ENCODE measurements at regions of chr1 and their contacts with region 1.

Region 1: GRCh38 chr1:109213785-109214468 is at the start of gene SARS1:
- DNase-seq: peak; percentile 75 to 95 (median 88)
- ATAC-seq: peak; percentile 82
- H3K4me3 ChIP-seq: peak within 1 kb of the TSS; percentile 81
- H3K4me3 Mint-ChIP-seq: peak within 1 kb of the TSS; percentile 99
- H3K27ac ChIP-seq: peak within 1 kb of the TSS; percentile 73 to 74
- H3K27ac Mint-ChIP-seq: peak within 1 kb of the TSS; percentile 90
- H3K4me1 ChIP-seq: peaks cover 33% of the 10 kb centered on the region
- H3K4me1 Mint-ChIP-seq: peaks cover 41% of the 10 kb centered on the region
- H3K27me3 ChIP-seq: no peaks in the 10 kb centered on the region
- H3K27me3 Mint-ChIP-seq: no peaks in the 10 kb centered on the region
- CTCF ChIP-seq: no peak
- total RNA-seq, gene SARS1: 122 to 131 TPM

Region 2: DNA sequence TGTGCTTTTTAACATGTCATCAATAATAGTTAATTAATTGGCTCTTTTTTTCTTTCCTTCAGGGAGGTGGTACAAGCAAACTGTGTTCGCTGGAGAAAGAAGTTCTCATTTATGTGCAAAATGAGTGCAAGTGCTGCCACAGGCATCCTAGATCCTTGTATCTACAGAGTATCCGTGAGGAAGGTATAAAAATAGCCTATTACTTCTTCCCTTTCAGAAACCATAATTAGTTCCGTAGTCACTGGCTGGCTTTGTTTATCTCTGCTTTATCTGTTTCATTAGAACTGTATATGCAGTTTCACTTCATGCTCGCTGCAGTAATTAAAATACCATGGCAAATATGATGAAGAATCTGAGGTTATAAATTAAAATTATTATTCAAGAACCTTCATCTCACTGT is 613.4 kb before region 1 on chr1:
- CTCF ChIA-PET with region 1: no interaction called
- POLR2A ChIA-PET with region 1: no interaction called
- intact Hi-C with region 1: no loop called
- DNase-seq: no peak
- ATAC-seq: no peak
- H3K4me3 ChIP-seq: no peak overlapping the region
- H3K4me3 Mint-ChIP-seq: no peak overlapping the region
- H3K27ac ChIP-seq: no peak overlapping the region
- H3K27ac Mint-ChIP-seq: no peak overlapping the region
- H3K4me1 ChIP-seq: no peaks in the 10 kb centered on the region
- H3K4me1 Mint-ChIP-seq: peaks cover 9% of the 10 kb centered on the region
- H3K27me3 ChIP-seq: no peaks in the 10 kb centered on the region
- H3K27me3 Mint-ChIP-seq: no peaks in the 10 kb centered on the region
- CTCF ChIP-seq: no peak

Region 3: GRCh38 chr1:109201123-109201703 is 12.7 kb before region 1 on chr1:
- CTCF ChIA-PET with region 1: interaction called, 9 read pairs
- POLR2A ChIA-PET with region 1: interaction called, 11 read pairs
- intact Hi-C with region 1: no loop called
- DNase-seq: peak in 7 of 14 experiments; percentile 5 to 44 (median 27)
- ATAC-seq: no peak
- H3K4me3 ChIP-seq: no peak overlapping the region
- H3K4me3 Mint-ChIP-seq: no peak overlapping the region
- H3K27ac ChIP-seq: no peak overlapping the region
- H3K27ac Mint-ChIP-seq: no peak overlapping the region
- H3K4me1 ChIP-seq: peaks cover 11% of the 10 kb centered on the region
- H3K4me1 Mint-ChIP-seq: peaks cover 17% of the 10 kb centered on the region
- H3K27me3 ChIP-seq: no peaks in the 10 kb centered on the region
- H3K27me3 Mint-ChIP-seq: no peaks in the 10 kb centered on the region
- CTCF ChIP-seq: no peak

Region 4: DNA sequence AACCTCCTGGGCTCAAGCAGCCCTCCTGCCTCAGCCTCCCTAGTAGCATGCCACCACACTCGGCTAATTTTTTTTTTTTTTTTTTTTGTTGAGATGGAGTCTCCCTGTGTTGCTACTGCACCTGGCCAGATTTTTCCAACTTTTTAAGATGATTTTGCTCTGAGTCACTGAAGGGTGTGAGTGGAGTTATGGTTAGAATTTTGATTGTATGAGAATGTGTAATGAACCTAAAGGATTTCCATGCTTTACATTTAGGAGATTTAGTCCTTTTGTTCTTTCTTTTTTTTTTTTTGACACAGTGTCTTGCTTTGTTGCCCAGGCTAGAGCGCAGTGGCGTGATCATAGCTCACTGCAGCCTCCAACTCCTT is 12.1 kb after region 1 on chr1:
- CTCF ChIA-PET with region 1: interaction called, 3 read pairs
- POLR2A ChIA-PET with region 1: interaction called, 14 read pairs
- intact Hi-C with region 1: no loop called
- DNase-seq: no peak
- ATAC-seq: no peak
- H3K4me3 ChIP-seq: no peak overlapping the region
- H3K4me3 Mint-ChIP-seq: no peak overlapping the region
- H3K27ac ChIP-seq: no peak overlapping the region
- H3K27ac Mint-ChIP-seq: peak overlapping the region; percentile 60
- H3K4me1 ChIP-seq: peaks cover 5% of the 10 kb centered on the region
- H3K4me1 Mint-ChIP-seq: peaks cover 34% of the 10 kb centered on the region
- H3K27me3 ChIP-seq: no peaks in the 10 kb centered on the region
- H3K27me3 Mint-ChIP-seq: no peaks in the 10 kb centered on the region
- CTCF ChIP-seq: no peak

Region 5: GRCh38 chr1:109239580-109240095 is 25.7 kb after region 1 on chr1:
- CTCF ChIA-PET with region 1: no interaction called
- POLR2A ChIA-PET with region 1: interaction called, 15 read pairs
- intact Hi-C with region 1: no loop called
- DNase-seq: peak in 5 of 14 experiments; percentile 31 to 64 (median 40)
- ATAC-seq: peak; percentile 75
- H3K4me3 ChIP-seq: no peak overlapping the region
- H3K4me3 Mint-ChIP-seq: no peak overlapping the region
- H3K27ac ChIP-seq: no peak overlapping the region
- H3K27ac Mint-ChIP-seq: peak overlapping the region; percentile 73
- H3K4me1 ChIP-seq: peaks cover 29% of the 10 kb centered on the region
- H3K4me1 Mint-ChIP-seq: peaks cover 31% of the 10 kb centered on the region
- H3K27me3 ChIP-seq: peaks cover 0 to 3% of the 10 kb centered on the region in 2 experiments
- H3K27me3 Mint-ChIP-seq: no peaks in the 10 kb centered on the region
- CTCF ChIP-seq: peak; percentile 26

Region 6: DNA sequence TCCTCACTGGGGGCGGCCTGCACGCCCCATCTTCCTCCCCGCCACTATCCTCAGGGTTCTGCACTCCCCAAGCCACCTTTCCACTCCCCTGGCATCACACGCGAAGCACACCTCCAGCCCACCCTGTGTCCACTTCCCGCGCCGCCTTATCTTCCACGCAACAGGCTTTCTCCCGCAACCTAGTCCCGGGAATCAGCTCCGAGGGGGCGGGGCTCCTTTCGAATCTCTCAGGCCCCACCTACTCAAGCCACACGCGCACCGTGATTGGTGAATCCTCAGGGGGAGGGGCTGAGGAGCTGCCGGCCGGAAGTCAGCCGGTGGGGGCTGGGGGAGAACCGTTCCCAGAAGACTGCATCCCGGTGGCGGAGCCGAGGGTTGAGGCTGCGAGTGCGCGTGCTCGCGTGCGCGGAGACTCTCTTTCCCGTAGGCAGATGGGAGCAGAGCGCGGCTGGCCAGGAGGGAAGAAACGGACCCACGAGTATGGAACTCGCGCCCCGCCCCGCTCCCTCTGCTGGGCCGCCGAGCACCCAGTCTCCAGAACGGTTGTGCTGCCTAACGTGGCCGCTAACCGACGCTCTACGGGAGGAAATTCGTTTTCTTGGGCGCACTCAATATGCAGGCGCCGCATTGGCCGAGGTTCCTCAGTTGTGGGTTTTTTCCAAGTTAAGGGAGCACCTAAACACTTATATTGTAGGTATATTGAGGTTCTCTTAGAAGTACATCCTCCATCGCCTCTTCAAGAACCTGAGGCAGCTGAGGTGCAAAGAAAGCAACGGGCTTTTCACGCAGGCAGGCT is 69.2 kb after region 1 on chr1 and contains the start of gene PSRC1:
- CTCF ChIA-PET with region 1: no interaction called
- POLR2A ChIA-PET with region 1: interaction called, 6 read pairs
- intact Hi-C with region 1: loop called in 1 of 2 experiments (anchors 5 kb)
- DNase-seq: peak; percentile 81 to 94 (median 85)
- ATAC-seq: peak; percentile 93
- H3K4me3 ChIP-seq: peak within 1 kb of the TSS; percentile 70
- H3K4me3 Mint-ChIP-seq: peak within 1 kb of the TSS; percentile 94
- H3K27ac ChIP-seq: peak within 1 kb of the TSS; percentile 31 to 59
- H3K27ac Mint-ChIP-seq: peak within 1 kb of the TSS; percentile 78
- H3K4me1 ChIP-seq: peaks cover 27% of the 10 kb centered on the region
- H3K4me1 Mint-ChIP-seq: peaks cover 19% of the 10 kb centered on the region
- H3K27me3 ChIP-seq: no peaks in the 10 kb centered on the region
- H3K27me3 Mint-ChIP-seq: no peaks in the 10 kb centered on the region
- CTCF ChIP-seq: peak; percentile 71
- total RNA-seq, gene PSRC1: 0.22 to 0.91 TPM

Region 7: GRCh38 chr1:109620841-109621286 is 406.9 kb after region 1 on chr1:
- CTCF ChIA-PET with region 1: no interaction called
- POLR2A ChIA-PET with region 1: no interaction called
- intact Hi-C with region 1: loop called in 1 of 2 experiments (anchors 10 kb)
- DNase-seq: peak; percentile 91 to 99 (median 97)
- ATAC-seq: peak; percentile 86
- H3K4me3 ChIP-seq: peak overlapping the region; percentile 91
- H3K4me3 Mint-ChIP-seq: peak overlapping the region; percentile 99
- H3K27ac ChIP-seq: peak overlapping the region; percentile 85 to 95
- H3K27ac Mint-ChIP-seq: peak overlapping the region; percentile 89
- H3K4me1 ChIP-seq: peaks cover 80% of the 10 kb centered on the region
- H3K4me1 Mint-ChIP-seq: peaks cover 82% of the 10 kb centered on the region
- H3K27me3 ChIP-seq: no peaks in the 10 kb centered on the region
- H3K27me3 Mint-ChIP-seq: no peaks in the 10 kb centered on the region
- CTCF ChIP-seq: no peak

Measured in CD4-positive, alpha-beta T cell (primary cell).